Lower lobe of right lung (tissue), 2 donors: ENCODE measurements at regions of chr10 and their contacts with region 1.

Region 1: GRCh38 chr10:77641788-77642397 is 4.3 kb upstream of the KCNMA1 start:
- DNase-seq: no peak
- ATAC-seq: peak in 1 of 2 donors; percentile 63
- H3K4me3 ChIP-seq: no peak overlapping the region
- H3K27ac ChIP-seq: no peak overlapping the region
- H3K4me1 ChIP-seq: peaks cover 2% of the 10 kb centered on the region
- H3K27me3 ChIP-seq: peaks cover 25% of the 10 kb centered on the region
- CTCF ChIP-seq: peak; percentile 78

Region 2: GRCh38 chr10:77173615-77174461 is 468.1 kb before region 1 on chr10:
- intact Hi-C with region 1: loop called (anchors 10 kb)
- DNase-seq: peak; percentile 61
- ATAC-seq: peak; percentile 77 to 87
- H3K4me3 ChIP-seq: no peak overlapping the region
- H3K27ac ChIP-seq: no peak overlapping the region
- H3K4me1 ChIP-seq: no peaks in the 10 kb centered on the region
- H3K27me3 ChIP-seq: no peaks in the 10 kb centered on the region
- CTCF ChIP-seq: peak; percentile 85

Region 3: GRCh38 chr10:77391605-77392235 is 250.2 kb before region 1 on chr10:
- intact Hi-C with region 1: loop called (anchors 10 kb)
- DNase-seq: peak; percentile 67
- ATAC-seq: peak; percentile 70 to 80
- H3K4me3 ChIP-seq: no peak overlapping the region
- H3K27ac ChIP-seq: no peak overlapping the region
- H3K4me1 ChIP-seq: peaks cover 15% of the 10 kb centered on the region
- H3K27me3 ChIP-seq: no peaks in the 10 kb centered on the region
- CTCF ChIP-seq: peak; percentile 44

Region 4: DNA sequence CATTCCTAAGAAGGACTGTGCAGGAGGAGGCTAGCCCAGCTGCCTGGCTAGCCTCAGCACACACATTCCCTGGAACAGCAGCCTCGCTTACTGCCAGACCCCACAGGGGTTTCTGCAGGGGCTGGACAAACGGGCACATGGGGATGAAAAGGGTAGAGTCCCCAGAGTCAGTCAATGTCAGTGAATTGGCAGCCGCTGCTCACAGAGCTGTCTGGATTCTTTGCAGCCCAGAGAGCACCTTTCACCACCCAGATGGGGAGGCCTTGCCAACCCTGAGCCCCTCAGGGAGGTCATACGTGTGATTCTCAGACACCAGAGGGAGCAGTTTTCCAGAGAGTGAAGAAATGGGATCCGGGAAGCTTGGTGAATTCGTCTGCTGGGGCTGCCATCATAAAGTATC is 147.6 kb before region 1 on chr10:
- intact Hi-C with region 1: loop called (anchors 10 kb)
- DNase-seq: no peak
- ATAC-seq: no peak
- H3K4me3 ChIP-seq: no peak overlapping the region
- H3K27ac ChIP-seq: no peak overlapping the region
- H3K4me1 ChIP-seq: no peaks in the 10 kb centered on the region
- H3K27me3 ChIP-seq: no peaks in the 10 kb centered on the region
- CTCF ChIP-seq: no peak

Region 5: DNA sequence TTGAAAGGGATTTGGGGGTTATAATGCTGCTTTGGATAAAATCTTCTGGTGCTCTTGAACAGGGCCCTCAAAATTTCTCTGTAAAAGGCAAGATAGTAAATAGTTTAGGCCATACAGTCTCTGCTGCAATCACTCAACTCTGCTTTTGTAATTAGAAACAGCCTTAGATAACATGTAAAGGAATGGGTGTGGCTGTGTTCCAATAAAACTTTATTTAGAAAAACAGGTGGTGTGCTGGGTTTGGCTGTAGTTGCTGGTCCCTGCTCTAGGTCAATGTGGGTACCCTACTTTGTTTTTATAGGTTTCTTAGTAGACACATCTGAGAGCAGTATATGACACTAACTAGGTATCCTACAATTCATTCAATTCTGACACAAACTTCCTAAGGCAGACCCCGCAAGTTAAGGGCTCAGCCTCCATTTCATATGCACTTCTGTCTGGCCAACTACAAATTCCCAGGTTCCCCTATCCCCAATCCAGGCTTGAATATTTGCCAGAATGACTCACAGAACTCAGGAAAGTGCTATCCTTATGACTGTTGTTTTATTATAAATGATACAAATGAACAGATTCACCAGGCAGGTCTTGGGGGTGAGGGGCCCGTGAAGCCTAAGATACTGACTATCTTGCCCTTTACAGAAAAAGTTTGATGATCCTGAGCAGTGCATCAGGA is 741.6 kb after region 1 on chr10:
- intact Hi-C with region 1: no loop called
- DNase-seq: no peak
- ATAC-seq: no peak
- H3K4me3 ChIP-seq: no peak overlapping the region
- H3K27ac ChIP-seq: no peak overlapping the region
- H3K4me1 ChIP-seq: no peaks in the 10 kb centered on the region
- H3K27me3 ChIP-seq: no peaks in the 10 kb centered on the region
- CTCF ChIP-seq: no peak